CD8-positive, alpha-beta T cell (primary cell): ENCODE measurements at regions of chr2 and their contacts with region 1.

Region 1: GRCh38 chr2:86079981-86080911 is 25.4 kb downstream of the POLR1A start:
- DNase-seq: peak; percentile 73 to 92 (median 86)
- ATAC-seq: peak; percentile 76
- H3K4me3 ChIP-seq: peak overlapping the region in 1 of 2 experiments; percentile 9
- H3K4me3 Mint-ChIP-seq: peak overlapping the region; percentile 23
- H3K27ac ChIP-seq: peak overlapping the region; percentile 50 to 89
- H3K27ac Mint-ChIP-seq: peak overlapping the region; percentile 92
- H3K4me1 ChIP-seq: peaks cover 21% of the 10 kb centered on the region
- H3K4me1 Mint-ChIP-seq: peaks cover 27% of the 10 kb centered on the region
- H3K27me3 ChIP-seq: no peaks in the 10 kb centered on the region
- H3K27me3 Mint-ChIP-seq: no peaks in the 10 kb centered on the region
- CTCF ChIP-seq: peak; percentile 69

Region 2: DNA sequence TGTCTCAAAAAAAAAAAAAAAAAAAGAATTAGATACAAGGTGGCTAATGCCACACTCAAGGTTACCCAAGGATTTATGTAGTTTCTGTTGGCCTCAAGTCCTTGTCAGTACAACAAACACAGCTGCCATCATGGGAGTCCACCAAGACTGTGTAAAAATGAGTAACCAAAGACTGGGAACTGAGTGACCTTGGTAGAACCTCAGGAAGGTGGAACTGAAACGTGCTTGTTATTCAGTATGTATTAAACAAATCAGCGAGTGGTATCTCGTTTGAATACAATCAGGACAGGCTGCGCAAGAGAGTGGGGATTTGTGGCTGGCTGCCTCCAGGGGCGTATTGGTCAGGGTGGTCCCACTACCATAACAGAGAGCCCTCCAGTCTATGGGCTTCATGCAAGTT is 410.7 kb before region 1 on chr2:
- CTCF ChIA-PET with region 1: no interaction called
- POLR2A ChIA-PET with region 1: no interaction called
- intact Hi-C with region 1: no loop called
- DNase-seq: no peak
- ATAC-seq: no peak
- H3K4me3 ChIP-seq: no peak overlapping the region
- H3K4me3 Mint-ChIP-seq: no peak overlapping the region
- H3K27ac ChIP-seq: no peak overlapping the region
- H3K27ac Mint-ChIP-seq: no peak overlapping the region
- H3K4me1 ChIP-seq: no peaks in the 10 kb centered on the region
- H3K4me1 Mint-ChIP-seq: no peaks in the 10 kb centered on the region
- H3K27me3 ChIP-seq: no peaks in the 10 kb centered on the region
- H3K27me3 Mint-ChIP-seq: peaks cover 2% of the 10 kb centered on the region
- CTCF ChIP-seq: no peak

Region 3: DNA sequence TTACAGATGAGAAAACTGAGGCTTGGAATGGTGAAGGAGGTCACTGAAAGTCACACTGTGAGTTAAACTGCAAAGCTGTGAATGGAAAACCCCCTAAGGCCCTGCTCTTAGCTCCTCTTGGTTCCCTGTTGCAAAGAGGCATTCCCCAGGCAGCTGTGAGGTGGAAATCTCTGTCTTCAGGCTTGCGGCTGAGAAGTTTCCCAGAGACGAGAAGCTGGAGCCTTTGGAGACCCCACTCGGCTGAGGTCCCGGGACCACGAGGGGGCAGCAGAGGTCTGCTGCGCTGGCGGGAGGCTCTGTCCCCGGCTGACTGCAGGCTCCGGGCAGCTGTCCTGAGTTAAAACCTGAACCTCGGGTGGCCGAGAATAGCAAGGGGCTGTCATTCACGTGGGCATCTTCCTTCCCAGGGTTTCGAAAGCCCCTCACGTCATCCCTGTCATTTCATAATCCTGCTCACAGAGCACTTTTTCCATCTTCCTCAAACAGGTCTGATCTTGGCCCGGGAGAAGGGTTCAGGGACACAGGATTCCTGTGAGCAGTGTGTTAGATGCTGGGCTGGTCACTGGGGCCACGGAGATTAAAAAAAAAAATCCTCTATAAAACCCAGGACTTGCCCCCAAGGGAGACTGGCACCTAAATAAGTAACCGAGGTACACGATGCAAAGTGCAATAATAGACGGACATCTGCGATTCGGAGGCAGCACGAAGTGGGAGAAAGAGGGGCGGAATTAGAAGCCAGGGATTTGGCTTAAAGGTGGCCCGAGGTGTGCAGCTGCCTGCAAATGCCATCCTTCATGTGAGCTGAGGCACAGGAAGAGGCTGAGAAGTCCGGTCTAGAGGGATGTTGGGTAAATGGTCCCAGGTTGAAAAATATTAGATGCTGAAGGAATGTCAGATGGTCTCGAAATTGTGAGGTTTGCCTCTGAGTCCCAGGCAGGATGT is 351.1 kb before region 1 on chr2:
- CTCF ChIA-PET with region 1: interaction called, 16 read pairs
- POLR2A ChIA-PET with region 1: no interaction called
- intact Hi-C with region 1: loop called (anchors 1 kb)
- DNase-seq: peak; percentile 48 to 82 (median 73)
- ATAC-seq: peak; percentile 84
- H3K4me3 ChIP-seq: no peak overlapping the region
- H3K4me3 Mint-ChIP-seq: no peak overlapping the region
- H3K27ac ChIP-seq: no peak overlapping the region
- H3K27ac Mint-ChIP-seq: no peak overlapping the region
- H3K4me1 ChIP-seq: peaks cover 5% of the 10 kb centered on the region
- H3K4me1 Mint-ChIP-seq: peaks cover 2% of the 10 kb centered on the region
- H3K27me3 ChIP-seq: peaks cover 0 to 2% of the 10 kb centered on the region in 2 experiments
- H3K27me3 Mint-ChIP-seq: no peaks in the 10 kb centered on the region
- CTCF ChIP-seq: peak; percentile 78

Region 4: GRCh38 chr2:85750587-85751575 is 329.4 kb before region 1 on chr2:
- CTCF ChIA-PET with region 1: interaction called, 3 read pairs
- POLR2A ChIA-PET with region 1: no interaction called
- intact Hi-C with region 1: loop called in 1 of 2 experiments (anchors 2 kb)
- DNase-seq: peak; percentile 16 to 69 (median 57)
- ATAC-seq: peak; percentile 58
- H3K4me3 ChIP-seq: no peak overlapping the region
- H3K4me3 Mint-ChIP-seq: no peak overlapping the region
- H3K27ac ChIP-seq: no peak overlapping the region
- H3K27ac Mint-ChIP-seq: no peak overlapping the region
- H3K4me1 ChIP-seq: peaks cover 18% of the 10 kb centered on the region
- H3K4me1 Mint-ChIP-seq: peaks cover 25% of the 10 kb centered on the region
- H3K27me3 ChIP-seq: peaks cover 17 to 18% of the 10 kb centered on the region in 2 experiments
- H3K27me3 Mint-ChIP-seq: peaks cover 50% of the 10 kb centered on the region
- CTCF ChIP-seq: peak; percentile 66

Region 5: DNA sequence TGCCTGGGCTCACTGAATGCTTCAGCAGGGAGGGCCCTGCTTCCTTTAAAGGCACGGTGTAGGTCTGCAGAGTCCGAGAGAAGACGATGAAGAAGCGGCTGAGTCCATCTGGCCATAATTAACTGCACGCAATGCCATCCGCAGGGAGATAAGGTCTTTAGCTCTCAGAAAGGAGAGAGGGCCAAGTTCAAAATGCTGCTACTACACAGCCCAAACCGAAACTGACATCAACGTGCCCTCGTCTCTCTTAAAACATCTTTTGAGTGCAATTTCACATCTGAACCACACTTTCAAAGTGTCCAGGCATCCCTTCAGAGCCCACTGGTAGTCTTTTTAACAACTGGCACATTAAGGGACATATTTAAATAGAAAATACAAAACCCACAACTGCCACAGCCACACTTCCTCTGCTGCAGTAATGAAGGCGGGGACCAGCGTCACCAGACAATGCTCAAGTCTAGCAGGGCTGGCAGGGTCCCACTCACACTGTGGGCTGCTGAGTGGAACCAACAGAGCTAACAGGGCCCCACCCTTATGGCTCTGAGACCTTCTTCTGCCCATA is 227.2 kb before region 1 on chr2:
- CTCF ChIA-PET with region 1: interaction called, 19 read pairs
- POLR2A ChIA-PET with region 1: no interaction called
- intact Hi-C with region 1: no loop called
- DNase-seq: peak; percentile 59 to 93 (median 81)
- ATAC-seq: peak; percentile 89
- H3K4me3 ChIP-seq: peak overlapping the region; percentile 48 to 49
- H3K4me3 Mint-ChIP-seq: peak overlapping the region; percentile 85
- H3K27ac ChIP-seq: peak overlapping the region; percentile 87 to 97
- H3K27ac Mint-ChIP-seq: peak overlapping the region; percentile 99
- H3K4me1 ChIP-seq: peaks cover 63% of the 10 kb centered on the region
- H3K4me1 Mint-ChIP-seq: peaks cover 73% of the 10 kb centered on the region
- H3K27me3 ChIP-seq: no peaks in the 10 kb centered on the region
- H3K27me3 Mint-ChIP-seq: no peaks in the 10 kb centered on the region
- CTCF ChIP-seq: no peak

Region 6: DNA sequence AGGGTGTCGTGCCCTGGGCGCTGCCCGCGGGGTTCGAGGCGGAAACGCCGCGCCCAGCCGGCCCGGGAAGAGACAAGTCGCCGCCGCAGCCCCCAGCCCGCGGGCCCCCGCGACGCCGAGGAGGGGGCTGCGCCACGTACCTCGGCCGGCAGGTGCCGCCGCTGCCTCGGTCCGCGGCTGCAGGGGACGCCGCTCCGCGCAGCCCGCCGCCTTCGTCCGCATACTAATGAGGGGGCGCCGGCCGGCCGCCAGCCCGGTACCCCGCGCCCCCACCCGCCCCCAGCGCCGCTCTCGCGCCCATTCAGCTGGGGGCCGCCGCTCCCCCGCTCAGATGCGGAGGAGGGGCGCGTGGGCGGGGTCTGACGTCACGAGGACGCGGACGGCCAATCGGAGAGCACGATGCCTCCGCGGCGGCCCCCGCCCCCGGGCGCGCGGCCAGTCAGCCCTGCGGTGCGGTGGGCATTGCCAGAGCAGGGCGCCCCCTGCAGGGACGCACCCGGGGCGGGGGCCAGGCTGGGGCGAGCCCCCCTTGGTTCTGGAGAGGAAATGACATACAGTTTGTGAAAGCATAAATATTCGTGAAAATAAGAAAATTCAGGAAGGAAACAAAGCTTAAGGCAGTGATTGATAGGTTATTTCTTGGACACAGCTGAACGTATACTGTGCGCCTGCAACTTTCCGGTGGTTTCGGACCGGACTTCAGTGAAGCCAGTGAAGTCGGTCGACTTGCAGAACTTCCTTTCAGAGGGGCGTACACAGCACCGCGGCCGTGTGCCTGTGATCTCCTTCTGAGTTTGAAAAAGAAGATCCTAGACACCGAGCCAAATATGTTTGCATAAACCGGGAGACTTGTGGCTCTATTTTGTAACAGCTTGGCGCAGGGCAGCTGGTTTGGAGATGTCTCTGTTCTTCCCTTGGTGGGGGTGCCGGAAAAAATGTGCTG is 191.3 kb before region 1 on chr2 and contains the start of gene ST3GAL5:
- CTCF ChIA-PET with region 1: interaction called, 98 read pairs
- POLR2A ChIA-PET with region 1: interaction called, 5 read pairs
- intact Hi-C with region 1: loop called (anchors 1 kb)
- DNase-seq: peak; percentile 84 to 98 (median 95)
- ATAC-seq: peak; percentile 85
- H3K4me3 ChIP-seq: peak within 1 kb of the TSS; percentile 89 to 96
- H3K4me3 Mint-ChIP-seq: peak within 1 kb of the TSS; percentile 95
- H3K27ac ChIP-seq: peak within 1 kb of the TSS; percentile 83 to 84
- H3K27ac Mint-ChIP-seq: peak within 1 kb of the TSS; percentile 97
- H3K4me1 ChIP-seq: peaks cover 59% of the 10 kb centered on the region
- H3K4me1 Mint-ChIP-seq: peaks cover 77% of the 10 kb centered on the region
- H3K27me3 ChIP-seq: no peaks in the 10 kb centered on the region
- H3K27me3 Mint-ChIP-seq: no peaks in the 10 kb centered on the region
- CTCF ChIP-seq: peak; percentile 71
- total RNA-seq, gene ST3GAL5: 110 to 115 TPM

Region 7: DNA sequence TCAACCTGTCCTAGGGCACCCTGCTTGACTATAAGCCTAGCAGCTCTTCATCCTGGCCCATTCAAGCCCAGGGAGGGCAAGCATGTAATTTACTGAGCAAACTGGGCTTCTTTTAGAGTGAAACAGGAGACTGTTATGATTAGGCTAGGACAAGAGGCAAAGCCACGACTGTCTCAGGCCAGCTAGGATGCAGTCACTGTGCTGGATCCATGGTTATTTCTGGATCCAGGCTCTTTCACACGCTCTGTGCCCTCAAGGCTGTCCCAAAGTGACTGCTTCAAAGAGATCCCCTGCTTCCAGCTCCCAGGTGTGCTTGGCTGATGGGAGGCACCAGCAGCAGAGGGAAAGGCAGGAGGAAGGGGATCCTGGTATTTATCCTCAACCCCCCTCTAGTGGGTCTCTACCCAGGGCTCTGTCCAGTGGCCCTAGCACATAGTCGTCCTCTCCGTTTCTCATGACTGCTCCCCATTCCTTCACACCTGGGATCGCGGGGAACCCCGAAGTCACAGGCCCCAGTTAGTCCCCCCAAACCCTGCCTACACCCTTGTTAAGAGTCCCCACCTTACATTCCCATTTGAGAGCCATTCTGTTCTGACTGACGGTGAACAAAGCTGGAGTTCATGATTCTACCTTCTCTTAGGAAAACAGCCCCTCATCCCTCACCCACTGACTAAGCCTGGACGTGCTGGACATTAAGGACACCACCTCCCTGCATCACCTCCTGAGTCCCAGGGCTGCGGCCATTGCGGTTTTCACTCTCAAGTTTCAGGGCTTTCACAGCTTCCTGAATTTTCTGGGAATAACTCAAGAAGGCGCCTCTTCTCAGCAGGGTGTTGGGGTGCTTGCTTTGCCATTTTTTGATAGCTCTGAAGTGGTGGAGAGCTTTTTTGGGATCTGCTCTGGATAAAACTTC is 37.7 kb before region 1 on chr2:
- CTCF ChIA-PET with region 1: interaction called, 42 read pairs
- POLR2A ChIA-PET with region 1: interaction called, 19 read pairs
- intact Hi-C with region 1: loop called (anchors 2 kb)
- DNase-seq: peak in 2 of 9 experiments; percentile 7 to 41
- ATAC-seq: no peak
- H3K4me3 ChIP-seq: no peak overlapping the region
- H3K4me3 Mint-ChIP-seq: no peak overlapping the region
- H3K27ac ChIP-seq: peak overlapping the region in 1 of 2 experiments; percentile 20
- H3K27ac Mint-ChIP-seq: peak overlapping the region; percentile 100
- H3K4me1 ChIP-seq: peaks cover 43% of the 10 kb centered on the region
- H3K4me1 Mint-ChIP-seq: peaks cover 45% of the 10 kb centered on the region
- H3K27me3 ChIP-seq: no peaks in the 10 kb centered on the region
- H3K27me3 Mint-ChIP-seq: no peaks in the 10 kb centered on the region
- CTCF ChIP-seq: no peak

Region 8: GRCh38 chr2:86068136-86068588 is 12.1 kb before region 1 on chr2:
- CTCF ChIA-PET with region 1: interaction called, 27 read pairs
- POLR2A ChIA-PET with region 1: no interaction called
- intact Hi-C with region 1: no loop called
- DNase-seq: peak; percentile 18 to 78 (median 52)
- ATAC-seq: peak; percentile 98
- H3K4me3 ChIP-seq: no peak overlapping the region
- H3K4me3 Mint-ChIP-seq: peak overlapping the region; percentile 50
- H3K27ac ChIP-seq: peak overlapping the region in 1 of 2 experiments; percentile 39
- H3K27ac Mint-ChIP-seq: peak overlapping the region; percentile 78
- H3K4me1 ChIP-seq: peaks cover 13% of the 10 kb centered on the region
- H3K4me1 Mint-ChIP-seq: peaks cover 20% of the 10 kb centered on the region
- H3K27me3 ChIP-seq: no peaks in the 10 kb centered on the region
- H3K27me3 Mint-ChIP-seq: no peaks in the 10 kb centered on the region
- CTCF ChIP-seq: no peak